Naive thymus-derived CD4-positive, alpha-beta T cell (primary cell): ENCODE measurements at regions of chr18 and their contacts with region 1.

Region 1: DNA sequence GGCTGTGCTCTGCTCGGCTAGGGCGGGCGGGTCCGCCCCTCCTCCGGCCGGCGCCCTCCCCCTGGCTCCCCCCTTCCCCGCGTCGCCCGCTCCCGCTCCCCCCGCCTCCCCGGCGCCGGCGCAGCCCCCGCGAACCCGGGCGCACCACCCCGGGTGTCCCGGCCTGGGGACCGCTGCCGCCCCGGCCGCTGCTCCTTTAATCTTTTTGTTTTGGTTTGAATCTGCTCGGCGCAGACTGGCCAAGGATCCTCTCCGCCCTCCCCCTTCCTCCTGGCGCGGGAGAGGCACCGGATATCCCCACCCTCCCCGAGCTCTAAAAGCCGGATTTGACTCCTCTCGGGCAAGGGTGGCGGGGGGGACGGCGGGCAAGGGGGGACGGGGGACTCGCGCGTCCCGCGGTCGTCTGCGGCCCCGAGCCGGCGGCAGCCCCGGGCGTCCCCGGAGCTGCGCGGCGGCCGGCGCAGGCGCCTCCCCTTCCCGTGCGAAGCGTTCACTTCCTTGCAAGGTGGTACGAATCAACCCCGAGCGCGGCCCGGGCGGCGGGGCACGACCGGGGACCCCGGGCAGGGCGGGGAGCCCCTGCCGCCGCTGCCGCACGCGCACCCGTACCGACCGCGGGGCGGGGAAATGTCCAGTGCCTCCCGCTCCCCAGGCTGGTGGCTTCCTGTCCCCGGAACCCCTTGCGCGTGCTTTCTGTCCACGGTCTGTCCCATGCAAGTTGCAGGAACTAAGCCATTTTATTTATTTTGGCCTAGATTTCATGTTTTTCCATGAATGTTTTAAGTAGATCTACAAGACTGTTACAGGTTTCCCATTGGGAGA is at the start of gene PTGR3:
- DNase-seq: peak; percentile 55 to 78 (median 74)
- ATAC-seq: peak; percentile 67
- H3K4me3 ChIP-seq: peak within 1 kb of the TSS; percentile 89
- H3K4me3 Mint-ChIP-seq: peak within 1 kb of the TSS; percentile 96 to 100 (median 99)
- H3K27ac ChIP-seq: peak within 1 kb of the TSS; percentile 90
- H3K27ac Mint-ChIP-seq: peak within 1 kb of the TSS; percentile 94 to 99 (median 98)
- H3K4me1 ChIP-seq: peaks cover 26 to 33% of the 10 kb centered on the region in 2 donors
- H3K4me1 Mint-ChIP-seq: peaks cover 48 to 67% (median 56%) of the 10 kb centered on the region in 7 donors
- H3K27me3 ChIP-seq: no peaks in the 10 kb centered on the region
- H3K27me3 Mint-ChIP-seq: peaks cover 0 to 36% (median 0%) of the 10 kb centered on the region in 5 donors
- total RNA-seq, gene PTGR3: 25.1 to 59.1 (median 31.7) TPM

Region 2: GRCh38 chr18:74370115-74370514 is 839.2 kb before region 1 on chr18:
- CTCF ChIA-PET with region 1: no interaction called
- POLR2A ChIA-PET with region 1: no interaction called
- intact Hi-C with region 1: loop called in 1 of 2 experiments (anchors 5 kb)
- DNase-seq: no peak
- ATAC-seq: no peak
- H3K4me3 ChIP-seq: no peak overlapping the region
- H3K4me3 Mint-ChIP-seq: peak overlapping the region in 3 of 10 donors; percentile 8 to 30 (median 30)
- H3K27ac ChIP-seq: no peak overlapping the region
- H3K27ac Mint-ChIP-seq: peak overlapping the region in 3 of 9 donors; percentile 42 to 88 (median 55)
- H3K4me1 ChIP-seq: peaks cover 22 to 54% of the 10 kb centered on the region in 2 donors
- H3K4me1 Mint-ChIP-seq: peaks cover 26 to 72% (median 54%) of the 10 kb centered on the region in 7 donors
- H3K27me3 ChIP-seq: peaks cover 0 to 6% of the 10 kb centered on the region in 2 donors
- H3K27me3 Mint-ChIP-seq: peaks cover 0 to 28% (median 0%) of the 10 kb centered on the region in 5 donors

Region 3: DNA sequence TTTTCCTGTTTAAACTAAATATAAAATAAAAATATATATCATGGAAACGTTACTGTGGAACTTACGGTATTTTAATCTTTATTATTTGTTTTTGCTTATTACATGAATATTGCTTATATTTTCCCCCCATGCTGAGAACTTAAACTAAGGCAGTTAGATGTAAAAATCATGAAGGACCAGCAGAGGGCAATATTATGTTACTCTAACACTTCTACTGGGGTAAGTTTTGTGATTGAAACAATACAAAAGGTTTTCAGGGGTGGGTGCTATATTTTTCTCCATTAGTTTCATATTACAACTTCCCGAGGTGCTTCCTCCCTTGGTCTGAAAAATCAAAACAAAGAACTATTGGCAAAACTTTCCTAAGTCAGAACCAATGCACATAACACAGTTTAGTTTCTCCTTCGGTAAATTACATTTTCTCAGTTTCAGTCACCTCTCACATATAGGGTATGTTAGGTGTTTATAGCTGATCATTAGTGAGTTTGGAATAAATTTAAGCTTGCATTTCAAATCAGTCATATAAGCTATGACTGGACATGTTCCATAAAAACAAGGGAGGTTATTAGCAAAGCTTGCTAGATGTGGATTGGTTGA is 556.9 kb before region 1 on chr18:
- CTCF ChIA-PET with region 1: no interaction called
- POLR2A ChIA-PET with region 1: interaction called, 3 read pairs
- intact Hi-C with region 1: loop called in 1 of 2 experiments (anchors 5 kb)
- DNase-seq: peak in 7 of 9 donors; percentile 7 to 48 (median 36)
- ATAC-seq: no peak
- H3K4me3 ChIP-seq: no peak overlapping the region
- H3K4me3 Mint-ChIP-seq: no peak overlapping the region
- H3K27ac ChIP-seq: no peak overlapping the region
- H3K27ac Mint-ChIP-seq: no peak overlapping the region
- H3K4me1 ChIP-seq: no peaks in the 10 kb centered on the region
- H3K4me1 Mint-ChIP-seq: peaks cover 0 to 17% (median 5%) of the 10 kb centered on the region in 7 donors
- H3K27me3 ChIP-seq: no peaks in the 10 kb centered on the region
- H3K27me3 Mint-ChIP-seq: no peaks in the 10 kb centered on the region

Region 4: GRCh38 chr18:74745633-74746403 is 463.5 kb before region 1 on chr18:
- CTCF ChIA-PET with region 1: no interaction called
- POLR2A ChIA-PET with region 1: no interaction called
- intact Hi-C with region 1: no loop called
- DNase-seq: no peak
- ATAC-seq: no peak
- H3K4me3 ChIP-seq: no peak overlapping the region
- H3K4me3 Mint-ChIP-seq: no peak overlapping the region
- H3K27ac ChIP-seq: no peak overlapping the region
- H3K27ac Mint-ChIP-seq: no peak overlapping the region
- H3K4me1 ChIP-seq: no peaks in the 10 kb centered on the region
- H3K4me1 Mint-ChIP-seq: peaks cover 0 to 10% (median 0%) of the 10 kb centered on the region in 7 donors
- H3K27me3 ChIP-seq: no peaks in the 10 kb centered on the region
- H3K27me3 Mint-ChIP-seq: no peaks in the 10 kb centered on the region

Region 5: DNA sequence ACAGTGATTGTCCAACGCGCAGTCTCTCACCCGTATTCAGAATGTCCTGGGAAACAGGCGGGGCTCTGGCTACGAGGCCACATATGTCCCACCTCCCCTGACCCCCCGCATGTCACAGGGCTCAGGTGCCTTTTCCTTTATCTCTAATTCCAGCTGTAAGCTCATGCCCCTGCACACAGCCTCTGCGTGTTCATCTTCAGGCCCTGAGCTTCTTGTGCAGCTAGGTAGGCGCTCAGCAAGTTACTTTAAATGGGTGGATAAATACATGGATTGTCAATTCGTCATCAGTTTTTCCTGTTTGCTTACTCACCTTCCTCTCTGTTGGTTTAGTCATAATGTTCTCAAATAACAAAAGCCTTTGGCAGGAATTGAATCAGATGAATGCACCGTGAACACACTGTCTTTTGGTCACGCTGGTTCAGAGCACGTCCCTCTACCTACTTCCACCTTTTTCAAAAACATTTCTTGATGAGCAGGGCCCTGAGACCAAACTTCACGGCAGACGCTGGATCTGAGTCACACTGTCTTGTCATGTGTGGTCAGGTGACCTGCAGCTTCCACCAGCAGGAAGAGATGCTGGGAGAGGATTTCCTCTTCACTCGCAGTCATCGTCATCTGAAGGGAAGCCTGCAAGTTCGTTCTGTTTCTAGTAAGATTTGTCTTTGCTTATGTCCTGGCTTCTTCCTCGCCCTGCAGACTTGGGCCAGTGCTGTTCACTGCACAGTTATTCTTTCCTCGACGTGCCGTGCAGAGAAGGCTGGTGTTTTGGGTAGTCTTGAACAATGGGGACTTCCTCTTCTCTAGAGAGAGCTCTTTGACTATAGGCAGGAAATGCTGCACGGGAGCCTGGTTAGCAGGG is 138.5 kb before region 1 on chr18:
- CTCF ChIA-PET with region 1: no interaction called
- POLR2A ChIA-PET with region 1: interaction called, 21 read pairs
- intact Hi-C with region 1: loop called (anchors 1 kb)
- DNase-seq: peak; percentile 26 to 75 (median 71)
- ATAC-seq: peak; percentile 85
- H3K4me3 ChIP-seq: peak overlapping the region; percentile 46
- H3K4me3 Mint-ChIP-seq: peak overlapping the region; percentile 82 to 95 (median 87)
- H3K27ac ChIP-seq: peak overlapping the region; percentile 67
- H3K27ac Mint-ChIP-seq: peak overlapping the region; percentile 91 to 99 (median 97)
- H3K4me1 ChIP-seq: peaks cover 28 to 30% of the 10 kb centered on the region in 2 donors
- H3K4me1 Mint-ChIP-seq: peaks cover 29 to 57% (median 39%) of the 10 kb centered on the region in 7 donors
- H3K27me3 ChIP-seq: no peaks in the 10 kb centered on the region
- H3K27me3 Mint-ChIP-seq: no peaks in the 10 kb centered on the region

Region 6: DNA sequence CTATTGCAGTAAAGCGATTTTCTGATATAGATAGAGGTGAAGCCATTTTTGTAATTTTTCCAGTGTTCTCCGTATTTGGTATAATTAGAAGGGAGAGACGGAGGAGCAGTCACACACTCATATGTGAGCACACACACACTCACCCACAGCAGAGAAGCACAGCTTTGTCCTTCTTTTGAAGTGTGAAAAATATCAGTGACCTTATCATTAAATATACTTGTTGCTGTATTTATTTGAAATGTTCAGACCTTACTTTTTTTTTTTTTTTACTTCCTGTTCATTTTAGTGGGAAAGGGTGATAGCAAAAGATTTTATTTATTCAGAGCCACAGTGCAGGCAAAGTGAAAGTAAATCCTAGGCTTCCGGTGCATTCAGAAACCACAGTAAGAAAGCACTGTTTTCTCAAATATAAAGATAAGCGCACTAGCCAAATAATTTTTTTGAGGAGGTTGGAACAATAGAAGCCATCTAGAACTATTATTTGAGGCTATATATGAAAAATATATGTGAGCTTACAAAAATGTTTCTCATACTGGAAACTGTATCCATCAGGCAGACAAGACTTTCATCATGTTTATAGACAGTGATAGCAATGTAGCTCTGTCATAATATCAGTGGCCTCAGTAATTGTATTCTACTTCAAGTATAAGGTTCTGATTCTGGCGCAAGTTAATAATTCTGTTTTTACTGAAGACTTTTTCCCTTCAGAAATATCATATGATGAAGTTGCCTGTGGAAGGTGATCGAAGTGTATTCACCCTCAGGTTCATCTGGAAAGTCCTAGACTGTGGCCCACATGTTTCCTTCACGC is 38.5 kb after region 1 on chr18:
- CTCF ChIA-PET with region 1: interaction called, 10 read pairs
- POLR2A ChIA-PET with region 1: interaction called, 91 read pairs
- intact Hi-C with region 1: loop called (anchors 1 kb)
- DNase-seq: peak in 7 of 9 donors; percentile 43 to 66 (median 58)
- ATAC-seq: peak; percentile 62
- H3K4me3 ChIP-seq: peak overlapping the region; percentile 43
- H3K4me3 Mint-ChIP-seq: peak overlapping the region; percentile 86 to 93 (median 90)
- H3K27ac ChIP-seq: peak overlapping the region; percentile 82
- H3K27ac Mint-ChIP-seq: peak overlapping the region; percentile 91 to 99 (median 96)
- H3K4me1 ChIP-seq: peaks cover 31 to 43% of the 10 kb centered on the region in 2 donors
- H3K4me1 Mint-ChIP-seq: peaks cover 44 to 94% (median 87%) of the 10 kb centered on the region in 7 donors
- H3K27me3 ChIP-seq: no peaks in the 10 kb centered on the region
- H3K27me3 Mint-ChIP-seq: no peaks in the 10 kb centered on the region

Region 7: GRCh38 chr18:76822510-76823160 is 1613.3 kb after region 1 on chr18 and contains the start of gene ZNF236:
- CTCF ChIA-PET with region 1: no interaction called
- POLR2A ChIA-PET with region 1: no interaction called
- intact Hi-C with region 1: loop called in 1 of 2 experiments (anchors 5 kb)
- DNase-seq: peak; percentile 38 to 78 (median 61)
- ATAC-seq: peak; percentile 76
- H3K4me3 ChIP-seq: peak within 1 kb of the TSS; percentile 99
- H3K4me3 Mint-ChIP-seq: peak within 1 kb of the TSS; percentile 88 to 96 (median 93)
- H3K27ac ChIP-seq: peak within 1 kb of the TSS; percentile 84
- H3K27ac Mint-ChIP-seq: peak within 1 kb of the TSS; percentile 89 to 97 (median 96)
- H3K4me1 ChIP-seq: peaks cover 8 to 10% of the 10 kb centered on the region in 2 donors
- H3K4me1 Mint-ChIP-seq: peaks cover 38 to 65% (median 56%) of the 10 kb centered on the region in 7 donors
- H3K27me3 ChIP-seq: no peaks in the 10 kb centered on the region
- H3K27me3 Mint-ChIP-seq: no peaks in the 10 kb centered on the region
- total RNA-seq, gene ZNF236: 25.9 to 34.5 (median 30.6) TPM